Uterus (tissue), 4 donors: ENCODE measurements at regions of chrX and their contacts with region 1.

Region 1: DNA sequence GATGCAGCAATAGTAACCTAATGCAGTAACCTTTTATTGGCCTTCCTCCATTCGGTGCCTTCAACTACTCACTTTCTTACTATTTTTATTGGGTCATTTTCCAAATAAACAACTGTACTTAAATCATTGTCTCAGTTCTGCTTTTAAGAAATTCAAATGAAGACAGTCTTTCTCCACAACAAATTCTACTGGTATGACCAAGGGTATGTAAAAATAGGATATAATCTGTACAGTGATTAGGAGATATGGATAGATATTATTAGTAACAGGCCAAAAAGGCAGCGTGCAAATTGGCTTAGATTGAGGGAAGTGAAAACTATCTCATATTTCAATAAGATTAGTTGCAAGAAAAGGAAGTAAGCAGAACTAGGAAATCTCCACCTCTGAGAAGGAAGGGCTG is 177.4 kb upstream of the PPP1R2C start:
- DNase-seq: no peak
- H3K4me3 ChIP-seq: no peak overlapping the region
- H3K27ac ChIP-seq: no peak overlapping the region
- H3K4me1 ChIP-seq: no peaks in the 10 kb centered on the region
- H3K27me3 ChIP-seq: no peaks in the 10 kb centered on the region
- CTCF ChIP-seq: no peak
- POLR2A ChIP-seq: no peak

Region 2: GRCh38 chrX:44507292-44507691 is 1551.9 kb after region 1 on chrX:
- intact Hi-C with region 1: loop called (anchors 5 kb)
- DNase-seq: no peak
- H3K4me3 ChIP-seq: no peak overlapping the region
- H3K27ac ChIP-seq: no peak overlapping the region
- H3K4me1 ChIP-seq: no peaks in the 10 kb centered on the region
- H3K27me3 ChIP-seq: no peaks in the 10 kb centered on the region
- CTCF ChIP-seq: no peak
- POLR2A ChIP-seq: no peak